Endothelial cell of umbilical vein (primary cell): ENCODE measurements at regions of chr5 and their contacts with region 1.

Region 1: GRCh38 chr5:139392678-139393496 is 2.0 kb downstream of the PROB1 start:
- DNase-seq: peak; percentile 57
- H3K4me3 ChIP-seq: peak overlapping the region in 2 of 3 experiments; percentile 1 to 15
- H3K27ac ChIP-seq: no peak overlapping the region
- H3K4me1 ChIP-seq: peaks cover 12% of the 10 kb centered on the region
- H3K27me3 ChIP-seq: peaks cover 7 to 14% of the 10 kb centered on the region in 2 experiments
- CTCF ChIP-seq: peak; percentile 75 to 97
- POLR2A ChIP-seq: no peak

Region 2: DNA sequence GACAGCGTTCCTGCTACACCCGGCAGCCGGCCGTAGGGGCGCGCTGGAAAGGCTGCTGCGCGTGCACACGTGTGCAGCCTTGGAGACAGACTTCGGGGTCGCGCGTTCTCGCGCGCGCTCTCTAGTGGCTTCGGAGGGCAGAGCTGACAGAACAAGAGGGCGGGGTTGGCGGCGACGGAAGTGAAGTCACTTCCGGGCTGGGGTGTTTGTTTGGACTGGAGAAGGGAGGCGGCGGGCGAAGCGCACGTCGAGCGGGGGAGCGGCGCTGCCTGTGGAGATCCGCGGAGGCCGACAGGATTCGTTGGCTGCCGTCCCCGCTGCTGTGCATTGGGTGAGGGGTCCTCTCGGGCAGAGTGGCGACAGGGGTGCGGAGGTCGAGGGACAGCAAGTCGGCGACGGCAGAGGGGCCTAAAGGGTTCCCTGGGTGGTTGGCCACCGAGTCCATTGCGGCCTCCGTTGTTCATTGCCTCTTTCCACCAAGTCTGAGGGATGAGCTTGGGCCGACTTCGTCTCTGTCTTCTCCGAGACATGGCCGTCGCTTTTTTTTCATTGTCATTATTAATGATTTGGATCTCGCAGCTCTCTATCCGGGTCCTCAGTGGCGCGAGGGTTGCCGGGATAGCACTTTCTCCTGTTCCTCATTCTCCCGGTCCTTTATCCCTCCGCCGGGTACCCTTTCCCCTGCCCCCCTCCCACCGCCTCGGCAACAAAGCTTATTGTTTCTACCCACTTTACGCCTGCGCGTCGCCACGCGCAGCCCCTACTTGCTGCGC is 51.1 kb before region 1 on chr5 and contains the start of gene PAIP2:
- CTCF ChIA-PET with region 1: interaction called, 6 read pairs
- POLR2A ChIA-PET with region 1: interaction called, 4 read pairs
- dilution Hi-C with region 1: no loop called
- intact Hi-C with region 1: loop called (anchors 1 kb)
- DNase-seq: peak; percentile 98
- H3K4me3 ChIP-seq: peak within 1 kb of the TSS; percentile 80 to 98 (median 91)
- H3K27ac ChIP-seq: peak within 1 kb of the TSS; percentile 95
- H3K4me1 ChIP-seq: peaks cover 7% of the 10 kb centered on the region
- H3K27me3 ChIP-seq: no peaks in the 10 kb centered on the region
- CTCF ChIP-seq: peak; percentile 77 to 86
- POLR2A ChIP-seq: peak; percentile 91
- total RNA-seq, gene PAIP2: 75.2 and 80.4 TPM in 2 replicates

Region 3: GRCh38 chr5:139593716-139594319 is 200.9 kb after region 1 on chr5:
- CTCF ChIA-PET with region 1: no interaction called
- POLR2A ChIA-PET with region 1: interaction called, 10 read pairs
- dilution Hi-C with region 1: no loop called
- intact Hi-C with region 1: no loop called
- DNase-seq: no peak
- H3K4me3 ChIP-seq: no peak overlapping the region
- H3K27ac ChIP-seq: no peak overlapping the region
- H3K4me1 ChIP-seq: peaks cover 8% of the 10 kb centered on the region
- H3K27me3 ChIP-seq: no peaks in the 10 kb centered on the region
- CTCF ChIP-seq: no peak
- POLR2A ChIP-seq: no peak